Naive thymus-derived CD4-positive, alpha-beta T cell (primary cell): ENCODE measurements at regions of chr19 and their contacts with region 1.

Region 1: DNA sequence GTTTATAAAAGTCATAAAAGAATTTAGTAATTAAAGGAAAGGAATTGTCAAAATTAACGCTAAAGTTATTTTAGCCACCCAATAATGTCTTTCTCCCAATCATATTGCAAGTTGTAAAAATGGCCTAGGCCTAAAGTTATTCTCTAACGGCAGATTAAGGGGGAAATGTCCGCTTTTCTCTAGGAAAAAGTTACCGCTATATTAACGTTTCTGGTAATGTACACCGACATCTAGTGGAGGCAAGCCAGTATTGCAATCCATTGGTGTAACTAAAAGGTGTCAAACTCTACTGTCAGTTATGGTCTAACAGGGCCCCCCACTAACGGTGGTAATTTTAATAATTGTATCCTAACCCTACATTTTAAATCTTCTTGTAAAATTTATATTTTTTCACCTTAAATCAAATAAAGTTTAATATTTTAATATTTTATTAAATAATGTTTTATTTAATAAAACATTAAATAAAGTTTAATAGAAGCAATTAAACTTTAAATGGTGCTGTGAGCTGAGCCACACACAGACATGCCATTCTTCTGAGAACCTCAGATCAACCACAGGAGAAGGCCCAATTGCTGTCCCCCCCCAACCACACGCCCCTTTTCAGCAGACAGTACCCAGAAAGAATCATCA is 35.9 kb upstream of the ZSCAN5A start:
- DNase-seq: peak in 8 of 9 donors; percentile 21 to 61 (median 46)
- ATAC-seq: peak; percentile 70
- H3K4me3 ChIP-seq: no peak overlapping the region
- H3K4me3 Mint-ChIP-seq: no peak overlapping the region
- H3K27ac ChIP-seq: no peak overlapping the region
- H3K27ac Mint-ChIP-seq: peak overlapping the region in 1 of 9 donors; percentile 44
- H3K4me1 ChIP-seq: no peaks in the 10 kb centered on the region
- H3K4me1 Mint-ChIP-seq: peaks cover 0 to 5% (median 0%) of the 10 kb centered on the region in 7 donors
- H3K27me3 ChIP-seq: no peaks in the 10 kb centered on the region
- H3K27me3 Mint-ChIP-seq: no peaks in the 10 kb centered on the region

Region 2: GRCh38 chr19:56066152-56067023 is 284.1 kb before region 1 on chr19:
- CTCF ChIA-PET with region 1: interaction called, 5 read pairs
- POLR2A ChIA-PET with region 1: no interaction called
- intact Hi-C with region 1: loop called (anchors 1 to 5 kb)
- DNase-seq: peak; percentile 38 to 67 (median 58)
- ATAC-seq: peak; percentile 74
- H3K4me3 ChIP-seq: peak overlapping the region; percentile 38
- H3K4me3 Mint-ChIP-seq: peak overlapping the region; percentile 44 to 80 (median 74)
- H3K27ac ChIP-seq: no peak overlapping the region
- H3K27ac Mint-ChIP-seq: peak overlapping the region in 1 of 9 donors; percentile 17
- H3K4me1 ChIP-seq: no peaks in the 10 kb centered on the region
- H3K4me1 Mint-ChIP-seq: peaks cover 4 to 14% (median 12%) of the 10 kb centered on the region in 7 donors
- H3K27me3 ChIP-seq: no peaks in the 10 kb centered on the region
- H3K27me3 Mint-ChIP-seq: peaks cover 0 to 45% (median 38%) of the 10 kb centered on the region in 5 donors